Left colon (tissue), 2 donors: ENCODE measurements at regions of chr16 and their contacts with region 1.

Region 1: GRCh38 chr16:30844671-30845449 is 49.0 kb downstream of the BCL7C start:
- DNase-seq: peak; percentile 71 to 83
- ATAC-seq: peak; percentile 83

Region 2: GRCh38 chr16:30902029-30902972 is 57.4 kb after region 1 on chr16:
- intact Hi-C with region 1: loop called in 1 of 2 experiments (anchors 5 kb)
- DNase-seq: peak; percentile 47 to 76
- ATAC-seq: peak; percentile 91

Region 3: DNA sequence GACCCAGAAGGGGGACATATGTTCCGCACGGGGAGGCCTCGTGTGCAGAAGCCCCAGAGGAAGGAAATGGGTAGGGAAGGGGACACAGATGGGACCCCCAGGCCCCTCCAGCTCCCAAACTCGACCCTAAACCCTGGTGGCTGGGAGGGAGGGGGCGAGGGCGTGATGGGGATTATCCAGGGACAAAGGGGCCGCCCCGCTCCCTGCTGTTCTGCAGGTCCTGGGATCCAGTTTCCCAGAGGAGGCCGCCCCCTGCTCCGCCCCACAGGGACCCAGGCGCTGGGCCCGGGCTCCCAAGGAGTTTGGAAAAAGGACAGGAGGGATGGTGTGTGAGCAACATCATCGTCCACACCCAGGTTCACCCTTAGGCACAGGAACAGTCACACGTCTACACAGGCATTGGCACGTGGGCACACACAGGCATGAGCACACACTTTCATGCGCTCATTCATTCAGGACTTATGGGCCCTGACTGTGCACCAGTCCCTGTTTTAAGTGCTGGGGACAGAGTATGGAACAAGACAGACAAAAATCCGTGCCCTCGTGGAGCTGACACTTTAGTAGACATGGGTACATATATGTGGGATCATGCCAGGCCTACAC is 65.7 kb after region 1 on chr16:
- intact Hi-C with region 1: loop called in 1 of 2 experiments (anchors 10 kb)
- DNase-seq: no peak
- ATAC-seq: no peak

Region 4: GRCh38 chr16:30922960-30923535 is 78.2 kb after region 1 on chr16:
- intact Hi-C with region 1: loop called (anchors 5 to 10 kb)
- DNase-seq: peak; percentile 99 to 100
- ATAC-seq: peak; percentile 70